BJ (cell line): ENCODE measurements at regions of chr18 and their contacts with region 1.

Region 1: GRCh38 chr18:72623444-72623843 is 79.3 kb upstream of the CBLN2 start:
- DNase-seq: no peak
- H3K4me3 ChIP-seq: no peak overlapping the region
- H3K27me3 ChIP-seq: no peaks in the 10 kb centered on the region
- CTCF ChIP-seq: no peak

Region 2: DNA sequence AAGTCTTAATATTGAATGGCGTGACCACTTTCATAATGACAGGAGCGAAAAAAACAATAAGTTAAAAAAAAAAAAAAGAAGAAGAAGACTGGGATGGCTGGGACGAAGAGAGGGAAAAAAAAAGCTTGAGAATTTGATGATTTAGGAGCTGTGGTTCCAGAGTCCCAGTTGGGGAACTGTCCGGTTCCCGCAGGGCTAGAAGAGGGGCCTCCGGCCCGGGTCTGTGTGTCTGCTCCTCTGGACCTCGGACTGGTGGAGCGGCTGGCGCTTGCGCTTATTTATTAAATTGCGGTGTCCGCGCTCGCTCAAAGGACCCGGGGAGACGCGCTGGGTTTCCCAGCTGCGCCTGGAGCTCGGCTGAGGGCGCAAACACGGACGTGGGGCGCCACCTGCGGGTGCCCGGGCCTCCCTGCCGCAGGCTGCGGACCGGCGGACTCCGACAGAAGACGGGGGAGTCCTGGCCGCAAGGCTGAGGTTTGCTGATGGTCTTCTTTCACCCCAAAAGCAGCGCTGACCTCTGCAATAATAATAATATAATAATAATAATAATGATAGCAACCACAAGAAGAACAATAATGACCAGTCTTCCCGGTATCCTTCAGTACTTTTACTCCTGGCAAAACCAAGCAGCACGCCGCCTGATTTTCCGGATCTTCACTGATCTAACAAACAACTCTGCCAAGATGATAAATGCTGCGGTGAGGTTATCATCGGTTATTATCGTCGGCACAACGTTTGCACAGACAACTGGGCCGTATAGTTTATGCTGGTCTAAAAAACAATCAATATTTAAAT is 79.2 kb before region 1 on chr18 and contains the start of gene CBLN2:
- CTCF ChIA-PET with region 1: no interaction called
- POLR2A ChIA-PET with region 1: interaction called, 13 read pairs
- DNase-seq: no peak
- H3K4me3 ChIP-seq: no peak within 1 kb of the TSS
- H3K27me3 ChIP-seq: peaks cover 3% of the 10 kb centered on the region
- CTCF ChIP-seq: peak; percentile 69
- polyA plus RNA-seq, gene CBLN2: not detected in 2 replicates